ENCODE measurements at regions of chr1 and their contacts with region 1.

Region 1: GRCh38 chr1:46527474-46528296 is 23.8 kb downstream of the KNCN start:
- DNase-seq: peak; percentile 64 to 79 (median 72)
- H3K4me3 ChIP-seq: no peak overlapping the region
- H3K4me3 Mint-ChIP-seq: peak overlapping the region in 1 of 2 donors; percentile 46
- H3K27ac ChIP-seq: no peak overlapping the region
- H3K27ac Mint-ChIP-seq: peak overlapping the region in 1 of 7 donors; percentile 18
- H3K4me1 ChIP-seq: no peaks in the 10 kb centered on the region
- H3K4me1 Mint-ChIP-seq: peaks cover under 1% of the 10 kb centered on the region
- H3K27me3 ChIP-seq: peaks cover 2 to 48% of the 10 kb centered on the region in 2 donors
- H3K27me3 Mint-ChIP-seq: peaks cover 36 to 79% (median 42%) of the 10 kb centered on the region in 3 donors
- CTCF ChIP-seq: peak; percentile 90

Region 2: DNA sequence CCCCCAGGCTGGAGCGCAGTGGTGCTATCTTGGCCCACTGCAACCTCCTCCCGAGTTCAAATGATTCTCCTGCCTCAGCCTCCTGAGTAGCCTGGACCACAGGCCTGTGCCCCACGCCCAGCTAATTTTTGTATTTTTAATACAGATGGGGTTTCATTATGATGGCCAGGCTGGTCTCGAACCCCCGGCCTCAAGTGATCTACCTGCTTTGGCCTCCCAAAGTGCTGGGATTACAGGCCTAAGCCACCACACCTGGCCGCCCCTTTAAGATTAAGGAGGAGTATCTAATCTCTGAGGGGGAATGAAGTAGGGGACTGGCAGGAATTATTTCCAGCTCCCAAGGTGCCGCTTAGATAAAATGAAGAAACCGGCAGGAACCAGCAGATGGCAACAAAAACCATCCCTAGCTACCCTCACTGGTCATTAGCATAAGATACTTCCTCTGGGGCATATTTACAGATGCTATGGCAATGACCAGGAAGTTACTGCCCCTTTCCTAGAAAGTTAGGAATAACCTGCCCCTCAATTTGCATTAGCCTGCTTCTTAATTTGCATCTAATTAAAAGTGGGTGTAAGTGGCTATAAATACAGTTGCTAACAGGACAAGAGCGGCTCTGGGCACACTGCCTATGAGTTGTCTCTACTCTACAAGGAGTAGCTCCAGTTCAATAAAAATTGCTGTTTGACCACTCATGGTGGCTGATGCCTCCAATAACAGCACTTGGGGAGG is 194.2 kb before region 1 on chr1:
- intact Hi-C with region 1: loop called (anchors 5 to 10 kb)
- DNase-seq: peak; percentile 53 to 84 (median 76)
- H3K4me3 ChIP-seq: no peak overlapping the region
- H3K4me3 Mint-ChIP-seq: no peak overlapping the region
- H3K27ac ChIP-seq: no peak overlapping the region
- H3K27ac Mint-ChIP-seq: peak overlapping the region in 2 of 7 donors; percentile 21 to 78
- H3K4me1 ChIP-seq: peaks cover 2 to 8% of the 10 kb centered on the region in 2 donors
- H3K4me1 Mint-ChIP-seq: peaks cover 4% of the 10 kb centered on the region
- H3K27me3 ChIP-seq: no peaks in the 10 kb centered on the region
- H3K27me3 Mint-ChIP-seq: peaks cover 0 to 3% (median 0%) of the 10 kb centered on the region in 3 donors
- CTCF ChIP-seq: peak; percentile 70

Region 3: GRCh38 chr1:46401964-46402626 is 125.6 kb before region 1 on chr1:
- intact Hi-C with region 1: loop called in 1 of 2 experiments (anchors 5 kb)
- DNase-seq: peak; percentile 78 to 91 (median 87)
- H3K4me3 ChIP-seq: peak overlapping the region in 1 of 3 experiments; percentile 25
- H3K4me3 Mint-ChIP-seq: peak overlapping the region in 1 of 2 donors; percentile 51
- H3K27ac ChIP-seq: peak overlapping the region; percentile 72 to 76
- H3K27ac Mint-ChIP-seq: peak overlapping the region; percentile 63 to 88 (median 77)
- H3K4me1 ChIP-seq: peaks cover 65 to 74% of the 10 kb centered on the region in 2 donors
- H3K4me1 Mint-ChIP-seq: peaks cover 68% of the 10 kb centered on the region
- H3K27me3 ChIP-seq: no peaks in the 10 kb centered on the region
- H3K27me3 Mint-ChIP-seq: peaks cover 1 to 2% (median 2%) of the 10 kb centered on the region in 3 donors
- CTCF ChIP-seq: no peak

Region 4: DNA sequence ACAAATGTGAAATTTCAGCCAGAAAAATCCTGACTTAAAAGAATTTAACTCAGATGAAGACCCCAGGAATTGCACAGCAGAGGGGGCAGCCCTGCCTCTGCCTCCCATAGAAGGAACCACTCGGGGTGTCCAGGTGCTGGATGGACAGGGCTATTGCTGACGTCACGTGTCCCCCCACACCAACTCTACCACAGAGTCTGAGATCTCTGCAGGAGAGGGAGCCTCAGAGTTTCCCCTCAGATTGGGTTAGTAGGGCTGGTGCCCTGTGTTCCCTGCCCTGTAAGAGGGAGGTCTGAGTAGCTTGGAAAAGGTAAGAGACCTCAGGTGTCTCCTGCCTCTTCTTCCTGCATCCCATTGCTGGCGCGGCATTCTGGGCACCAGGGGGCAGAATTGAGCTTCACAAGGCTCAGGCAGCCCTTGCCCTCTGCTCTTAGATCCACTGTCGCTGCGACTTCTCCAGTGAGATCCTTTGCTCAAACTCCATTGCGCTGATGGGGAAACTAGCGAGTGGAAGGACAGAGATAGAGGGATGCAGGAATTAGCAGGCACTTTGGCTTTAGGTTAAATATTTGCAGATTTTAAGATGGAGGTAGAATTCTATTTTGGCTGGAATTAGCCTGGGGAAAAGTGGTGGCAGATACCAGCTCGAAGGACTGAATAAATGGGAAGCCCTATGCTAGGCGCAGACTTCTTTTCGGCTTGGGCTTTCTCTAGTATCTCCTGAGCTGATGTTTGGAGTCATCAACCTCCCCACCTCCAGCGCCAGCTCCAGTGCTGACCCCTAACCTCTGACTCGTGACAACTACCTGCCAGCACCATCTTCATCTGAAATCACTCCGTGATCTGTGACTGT is 80.8 kb before region 1 on chr1:
- intact Hi-C with region 1: loop called (anchors 2 kb)
- DNase-seq: peak; percentile 46 to 61 (median 56)
- H3K4me3 ChIP-seq: no peak overlapping the region
- H3K4me3 Mint-ChIP-seq: peak overlapping the region in 1 of 2 donors; percentile 83
- H3K27ac ChIP-seq: no peak overlapping the region
- H3K27ac Mint-ChIP-seq: no peak overlapping the region
- H3K4me1 ChIP-seq: peaks cover 22 to 26% of the 10 kb centered on the region in 2 donors
- H3K4me1 Mint-ChIP-seq: peaks cover 31% of the 10 kb centered on the region
- H3K27me3 ChIP-seq: peaks cover 42 to 55% of the 10 kb centered on the region in 2 donors
- H3K27me3 Mint-ChIP-seq: peaks cover 50 to 69% (median 64%) of the 10 kb centered on the region in 3 donors
- CTCF ChIP-seq: peak; percentile 88

Region 5: GRCh38 chr1:46477153-46477929 is 50.3 kb before region 1 on chr1:
- intact Hi-C with region 1: loop called (anchors 1 to 2 kb)
- DNase-seq: peak; percentile 73 to 86 (median 76)
- H3K4me3 ChIP-seq: no peak overlapping the region
- H3K4me3 Mint-ChIP-seq: no peak overlapping the region
- H3K27ac ChIP-seq: no peak overlapping the region
- H3K27ac Mint-ChIP-seq: peak overlapping the region in 1 of 7 donors; percentile 68
- H3K4me1 ChIP-seq: peaks cover 0 to 6% of the 10 kb centered on the region in 2 donors
- H3K4me1 Mint-ChIP-seq: peaks cover 3% of the 10 kb centered on the region
- H3K27me3 ChIP-seq: peaks cover 0 to 29% of the 10 kb centered on the region in 2 donors
- H3K27me3 Mint-ChIP-seq: peaks cover 23 to 45% (median 26%) of the 10 kb centered on the region in 3 donors
- CTCF ChIP-seq: peak; percentile 97

Region 6: DNA sequence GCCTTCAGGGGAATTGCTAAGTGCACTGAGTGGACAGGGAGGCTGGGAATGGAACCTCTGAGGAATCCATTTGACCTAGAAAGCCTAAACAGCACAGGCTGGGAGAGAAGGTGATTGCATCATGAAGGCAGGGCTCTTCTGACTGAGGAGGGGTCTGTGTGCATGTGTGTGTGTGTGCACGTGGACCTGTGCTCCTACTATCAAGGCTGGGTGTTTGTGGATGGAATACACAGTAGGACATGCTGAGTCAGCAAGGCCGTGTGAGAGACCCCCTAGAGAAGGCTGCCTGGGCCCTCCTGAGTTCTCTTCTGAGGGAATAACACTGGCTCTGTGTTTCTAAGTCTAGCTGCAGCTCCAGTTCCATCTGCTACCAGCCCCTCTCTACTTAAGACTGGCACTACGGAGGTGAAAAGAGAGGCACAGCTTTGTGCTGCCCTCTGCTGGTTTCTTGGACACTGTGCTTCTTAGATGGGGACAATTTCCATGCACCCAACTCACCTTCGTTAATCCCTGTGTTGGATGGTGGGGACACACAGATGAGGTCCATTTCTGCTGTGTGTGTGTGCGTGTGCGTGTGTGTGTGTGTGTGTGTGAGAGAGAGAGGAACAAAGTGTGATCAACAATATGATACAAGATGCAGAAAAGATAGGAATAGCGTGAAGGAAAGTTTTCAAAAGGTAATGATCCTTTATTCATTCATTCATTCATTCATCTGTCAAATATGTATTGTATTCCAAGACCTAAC is 197.5 kb after region 1 on chr1:
- intact Hi-C with region 1: loop called (anchors 2 to 10 kb)
- DNase-seq: peak; percentile 60 to 76 (median 68)
- H3K4me3 ChIP-seq: no peak overlapping the region
- H3K4me3 Mint-ChIP-seq: no peak overlapping the region
- H3K27ac ChIP-seq: no peak overlapping the region
- H3K27ac Mint-ChIP-seq: no peak overlapping the region
- H3K4me1 ChIP-seq: no peaks in the 10 kb centered on the region
- H3K4me1 Mint-ChIP-seq: peaks cover 4% of the 10 kb centered on the region
- H3K27me3 ChIP-seq: peaks cover 0 to 3% of the 10 kb centered on the region in 2 donors
- H3K27me3 Mint-ChIP-seq: peaks cover 15 to 33% (median 15%) of the 10 kb centered on the region in 3 donors
- CTCF ChIP-seq: peak; percentile 73